Heart right ventricle (tissue), 16 donors: ENCODE measurements at regions of chr13 and their contacts with region 1.

Region 1: GRCh38 chr13:76016799-76017400 is 380.8 kb downstream of the LMO7 start:
- DNase-seq: no peak
- ATAC-seq: peak in 1 of 8 donors; percentile 29
- H3K4me3 ChIP-seq: no peak overlapping the region
- H3K27ac ChIP-seq: no peak overlapping the region
- H3K4me1 ChIP-seq: peaks cover 0 to 20% (median 10%) of the 10 kb centered on the region in 9 donors
- H3K27me3 ChIP-seq: no peaks in the 10 kb centered on the region
- CTCF ChIP-seq: peak in 7 of 9 donors; percentile 27 to 51 (median 38)

Region 2: GRCh38 chr13:75876360-75877050 is 140.4 kb before region 1 on chr13:
- intact Hi-C with region 1: loop called in 7 of 10 experiments (anchors 1 to 10 kb)
- DNase-seq: peak in 1 of 2 donors; percentile 64
- ATAC-seq: peak; percentile 71 to 92 (median 87)
- H3K4me3 ChIP-seq: no peak overlapping the region
- H3K27ac ChIP-seq: no peak overlapping the region
- H3K4me1 ChIP-seq: peaks cover 0 to 7% (median 0%) of the 10 kb centered on the region in 9 donors
- H3K27me3 ChIP-seq: no peaks in the 10 kb centered on the region
- CTCF ChIP-seq: peak; percentile 87 to 95 (median 89)

Region 3: DNA sequence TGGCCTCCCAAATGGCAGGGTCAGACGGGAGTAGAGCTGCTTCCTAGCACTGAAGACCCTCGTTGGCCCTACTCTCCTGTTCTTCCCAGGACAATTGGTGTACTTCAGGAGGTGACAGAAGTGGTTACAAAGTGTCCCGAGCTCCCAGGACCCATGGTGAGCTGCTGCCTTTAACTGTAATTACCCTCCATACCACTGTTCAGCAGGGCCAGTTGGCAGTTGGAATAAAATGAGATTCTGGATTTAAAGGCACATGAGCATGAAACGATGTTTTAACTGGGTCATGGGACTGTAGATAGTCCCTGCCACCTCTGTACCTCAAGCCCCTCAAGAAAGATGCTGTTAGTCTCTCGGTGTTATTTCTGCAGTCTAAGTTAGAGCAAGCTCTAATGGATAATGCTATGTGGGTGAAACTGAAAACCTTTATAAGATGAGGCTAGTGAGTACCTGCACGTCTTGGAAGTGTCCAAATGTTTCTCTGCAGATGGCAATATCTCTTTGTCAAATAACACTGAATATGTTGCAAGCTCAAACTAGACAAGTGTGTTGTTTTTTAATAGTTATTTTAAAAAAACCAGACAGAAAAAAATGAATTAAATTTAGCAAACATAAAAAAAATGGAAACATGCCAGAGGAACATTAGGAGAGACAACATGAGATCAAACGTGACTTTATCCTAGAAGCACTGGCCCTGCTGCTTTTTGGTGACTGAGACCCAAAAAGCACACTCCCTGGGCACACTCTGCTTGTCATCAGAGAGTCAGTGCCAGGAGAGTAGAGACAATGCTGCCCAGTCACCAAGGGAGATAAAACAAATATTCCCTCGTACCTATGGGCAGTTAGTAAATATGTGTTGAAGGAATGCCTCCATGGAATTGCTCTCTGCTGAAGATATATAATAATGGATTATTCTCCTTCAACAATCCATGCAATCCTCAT is 114.5 kb before region 1 on chr13:
- intact Hi-C with region 1: loop called in 1 of 10 experiments (anchors 5 kb)
- DNase-seq: no peak
- ATAC-seq: peak in 7 of 8 donors; percentile 40 to 93 (median 67)
- H3K4me3 ChIP-seq: no peak overlapping the region
- H3K27ac ChIP-seq: peak overlapping the region in 2 of 10 donors; percentile 2 to 36
- H3K4me1 ChIP-seq: peaks cover 0 to 17% (median 4%) of the 10 kb centered on the region in 9 donors
- H3K27me3 ChIP-seq: no peaks in the 10 kb centered on the region
- CTCF ChIP-seq: no peak